ENCODE measurements at regions of chr10 and their contacts with region 1.

Region 1: GRCh38 chr10:30591249-30591670 is 38.3 kb downstream of the LYZL2 start:
- DNase-seq: peak; percentile 51
- ATAC-seq: peak; percentile 57
- H3K4me3 Mint-ChIP-seq: no peak overlapping the region
- H3K27ac Mint-ChIP-seq: no peak overlapping the region
- H3K4me1 Mint-ChIP-seq: peaks cover 3% of the 10 kb centered on the region
- H3K27me3 Mint-ChIP-seq: peaks cover 25% of the 10 kb centered on the region

Region 2: DNA sequence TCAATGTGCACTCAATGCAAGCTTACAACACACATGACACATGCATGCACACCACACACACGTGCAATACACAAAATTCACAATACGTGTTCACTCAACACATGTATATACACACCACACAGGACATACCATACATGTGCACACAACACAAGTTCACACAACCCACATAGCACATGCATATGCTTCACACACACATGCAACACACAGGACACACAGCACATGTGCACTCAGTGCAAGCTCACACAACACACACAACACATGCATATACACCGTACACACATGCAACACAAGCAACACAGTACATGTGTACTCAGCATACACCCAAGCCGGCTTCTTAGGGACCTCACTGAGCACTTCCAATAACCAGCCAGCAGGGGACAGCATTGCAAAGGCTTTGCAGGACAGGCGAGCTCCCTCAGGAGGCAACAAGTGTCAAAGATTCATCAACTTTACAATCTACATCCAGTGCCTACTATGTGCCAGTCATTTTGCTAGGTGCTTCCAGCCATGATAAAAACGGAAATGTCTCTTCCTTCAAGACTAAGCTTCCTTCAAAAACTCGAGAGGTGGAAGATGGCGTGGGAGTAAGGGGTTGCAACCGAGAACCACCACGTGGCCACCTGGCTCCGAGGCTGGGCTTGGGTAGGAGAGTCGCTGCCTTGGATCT is 593.0 kb before region 1 on chr10:
- CTCF ChIA-PET with region 1: interaction called, 20 read pairs
- POLR2A ChIA-PET with region 1: no interaction called
- DNase-seq: peak; percentile 85
- ATAC-seq: peak; percentile 84
- H3K4me3 Mint-ChIP-seq: no peak overlapping the region
- H3K27ac Mint-ChIP-seq: no peak overlapping the region
- H3K4me1 Mint-ChIP-seq: peaks cover 12% of the 10 kb centered on the region
- H3K27me3 Mint-ChIP-seq: peaks cover 32% of the 10 kb centered on the region

Region 3: GRCh38 chr10:30384701-30385201 is 206.5 kb before region 1 on chr10:
- CTCF ChIA-PET with region 1: interaction called, 149 read pairs
- POLR2A ChIA-PET with region 1: no interaction called
- DNase-seq: peak; percentile 37
- ATAC-seq: no peak
- H3K4me3 Mint-ChIP-seq: no peak overlapping the region
- H3K27ac Mint-ChIP-seq: no peak overlapping the region
- H3K4me1 Mint-ChIP-seq: no peaks in the 10 kb centered on the region
- H3K27me3 Mint-ChIP-seq: peaks cover 26% of the 10 kb centered on the region

Region 4: DNA sequence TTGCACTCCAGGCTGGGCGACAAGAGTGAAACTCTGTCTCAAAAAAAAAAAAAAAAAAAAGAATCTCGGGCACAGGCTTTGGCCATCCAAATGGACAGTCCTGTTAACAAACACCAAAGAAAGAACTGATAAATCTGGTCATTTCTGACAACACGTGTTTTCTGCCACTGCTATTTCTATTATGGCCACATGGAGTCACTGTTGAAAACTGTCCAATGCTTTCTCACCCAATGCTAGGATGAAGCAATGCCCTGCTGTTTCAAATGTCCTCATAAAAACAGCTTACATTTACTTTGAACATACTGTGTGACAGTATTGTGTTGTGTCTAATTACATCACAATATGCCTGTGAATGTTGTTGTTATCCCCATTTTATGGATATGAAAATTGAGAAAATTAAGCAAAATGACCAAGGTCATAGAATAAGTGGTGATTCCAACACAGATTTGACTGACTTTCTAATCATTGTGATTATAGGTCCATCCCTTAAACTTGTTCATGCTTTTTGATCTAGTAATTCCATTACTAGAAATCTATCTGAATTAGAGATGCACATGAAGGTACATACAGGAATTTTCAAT is 177.2 kb before region 1 on chr10:
- CTCF ChIA-PET with region 1: interaction called, 23 read pairs
- POLR2A ChIA-PET with region 1: no interaction called
- DNase-seq: peak; percentile 63
- ATAC-seq: peak; percentile 49
- H3K4me3 Mint-ChIP-seq: no peak overlapping the region
- H3K27ac Mint-ChIP-seq: no peak overlapping the region
- H3K4me1 Mint-ChIP-seq: peaks cover 35% of the 10 kb centered on the region
- H3K27me3 Mint-ChIP-seq: no peaks in the 10 kb centered on the region

Region 5: DNA sequence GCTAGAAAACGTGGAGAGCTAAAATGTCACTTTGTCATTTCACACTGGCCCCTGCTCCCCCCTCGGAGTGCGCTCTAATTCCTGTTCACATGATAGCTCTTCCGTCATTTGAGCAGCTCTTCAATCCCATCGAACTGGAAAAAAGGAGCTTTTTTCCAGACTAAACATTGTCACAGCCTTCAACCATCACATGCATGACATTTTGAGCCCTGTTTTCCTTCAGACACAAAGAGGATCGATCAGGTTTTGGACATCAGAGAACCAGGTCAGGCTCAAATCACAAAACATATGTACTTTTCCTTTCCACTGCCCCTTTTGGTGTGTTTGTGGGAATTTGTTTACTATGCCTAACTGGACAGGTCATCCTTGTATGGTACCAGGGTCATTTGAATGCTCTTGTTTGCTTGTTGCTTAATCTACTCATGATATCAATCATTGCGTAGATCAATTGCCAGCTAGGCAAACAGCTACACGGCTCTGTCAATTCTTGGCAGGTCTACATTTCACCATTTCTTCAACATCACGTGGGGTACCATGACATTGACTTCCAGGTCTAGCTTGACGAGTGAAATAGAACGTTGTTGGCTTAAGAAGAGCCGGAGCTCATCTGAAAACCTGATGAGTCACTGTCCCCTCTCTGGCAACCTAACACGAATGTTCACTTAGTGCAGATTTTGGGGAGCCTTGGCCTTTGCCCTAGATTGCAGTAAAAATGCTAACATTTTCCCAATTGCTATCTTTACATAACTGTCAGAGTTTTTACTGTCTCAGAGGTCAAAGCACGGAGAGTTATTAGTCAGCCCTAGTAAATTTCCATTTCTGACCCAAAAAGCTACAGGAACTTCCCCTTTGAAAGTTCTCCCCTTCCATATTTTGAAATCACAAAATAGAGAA is 49.0 kb before region 1 on chr10:
- CTCF ChIA-PET with region 1: interaction called, 30 read pairs
- POLR2A ChIA-PET with region 1: no interaction called
- DNase-seq: no peak
- ATAC-seq: no peak
- H3K4me3 Mint-ChIP-seq: no peak overlapping the region
- H3K27ac Mint-ChIP-seq: no peak overlapping the region
- H3K4me1 Mint-ChIP-seq: peaks cover 14% of the 10 kb centered on the region
- H3K27me3 Mint-ChIP-seq: peaks cover 2% of the 10 kb centered on the region

Region 6: DNA sequence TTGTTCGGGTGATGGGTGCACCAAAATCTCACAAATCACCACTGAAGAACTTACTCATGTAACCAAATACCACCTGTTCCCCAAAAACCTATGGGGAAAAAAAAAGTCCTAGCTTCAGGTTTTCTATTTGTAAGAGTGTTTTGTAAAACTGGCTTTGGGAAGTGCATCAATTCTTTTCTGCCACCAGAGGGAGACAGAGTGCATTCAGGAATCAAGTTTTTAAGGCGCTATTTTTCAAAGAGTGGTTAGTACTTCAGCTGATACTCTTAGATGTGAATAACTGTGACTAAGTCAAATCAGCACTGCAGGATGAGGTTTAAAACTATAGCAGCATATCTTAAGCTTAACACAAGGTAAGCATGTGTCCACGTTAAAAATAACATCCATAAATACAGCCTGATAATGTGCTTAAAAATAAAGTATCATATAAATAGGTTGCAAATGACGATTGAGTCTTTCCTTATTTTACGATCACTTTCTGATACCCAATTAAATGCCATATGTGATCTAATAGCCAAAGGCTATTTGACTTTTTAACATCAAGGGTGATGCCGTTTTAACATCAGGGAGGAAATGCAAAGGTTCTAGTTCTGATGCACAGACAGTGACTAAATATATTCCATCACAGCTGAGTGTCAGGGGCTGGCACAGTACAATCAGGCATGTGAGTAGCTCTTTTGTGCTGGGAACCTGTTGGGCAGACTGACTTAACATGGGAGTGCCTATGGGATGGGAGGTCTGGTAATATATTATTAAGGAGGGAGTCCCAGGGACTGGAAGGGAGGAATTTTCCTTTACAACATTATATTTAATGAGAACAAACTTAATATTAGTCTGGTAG is 48.9 kb after region 1 on chr10:
- CTCF ChIA-PET with region 1: interaction called, 15 read pairs
- POLR2A ChIA-PET with region 1: no interaction called
- DNase-seq: no peak
- ATAC-seq: no peak
- H3K4me3 Mint-ChIP-seq: no peak overlapping the region
- H3K27ac Mint-ChIP-seq: no peak overlapping the region
- H3K4me1 Mint-ChIP-seq: no peaks in the 10 kb centered on the region
- H3K27me3 Mint-ChIP-seq: peaks cover 43% of the 10 kb centered on the region